ENCODE measurements at regions of chr1 and their contacts with region 1.

Region 1: DNA sequence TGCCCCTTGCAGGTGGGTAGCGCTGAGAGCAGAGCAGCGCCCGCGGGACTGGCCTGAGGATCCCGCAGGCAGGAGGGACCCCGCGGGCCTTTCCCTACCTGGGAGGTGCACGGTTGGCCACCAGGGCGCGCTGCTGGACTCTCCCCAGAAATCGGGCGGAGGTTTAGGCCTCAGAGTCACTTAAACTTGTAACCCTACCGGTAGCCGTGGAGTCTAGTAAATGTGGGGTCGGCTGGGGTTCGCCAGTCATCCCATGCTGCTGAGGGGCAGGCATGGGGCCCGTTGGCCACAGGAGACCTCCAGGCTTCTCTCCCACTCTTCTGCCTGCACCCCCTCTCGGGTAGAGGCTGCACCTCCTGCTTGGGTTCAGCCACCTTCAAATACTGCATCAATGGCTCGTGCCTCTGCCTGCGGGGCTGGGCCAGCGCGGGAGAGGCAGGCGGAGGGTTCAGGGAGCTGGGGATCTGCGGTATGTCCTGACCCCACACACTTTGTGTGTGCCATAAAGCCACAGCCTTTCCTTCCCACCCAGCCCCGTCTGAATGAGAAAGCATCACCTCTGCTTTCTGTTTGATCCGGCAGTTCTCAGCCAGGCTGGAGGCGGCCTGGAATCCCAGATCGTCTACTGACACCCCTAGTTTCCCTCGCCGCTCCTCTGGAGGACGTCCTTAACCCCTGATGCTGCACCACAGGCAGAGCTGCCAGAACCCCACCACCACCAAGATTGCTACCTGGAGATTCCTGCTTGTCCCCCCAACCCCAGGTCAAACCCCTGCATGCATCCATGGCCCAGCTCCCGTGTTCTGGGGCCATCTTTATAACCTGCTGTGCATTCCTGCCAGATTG is 12.3 kb upstream of the GSTM4 start:
- DNase-seq: peak; percentile 95
- ATAC-seq: peak; percentile 98
- H3K4me3 Mint-ChIP-seq: no peak overlapping the region
- H3K27ac Mint-ChIP-seq: no peak overlapping the region
- H3K4me1 Mint-ChIP-seq: peaks cover 10% of the 10 kb centered on the region
- H3K27me3 Mint-ChIP-seq: no peaks in the 10 kb centered on the region

Region 2: GRCh38 chr1:109598655-109599054 is 45.0 kb before region 1 on chr1:
- CTCF ChIA-PET with region 1: interaction called, 18 read pairs
- POLR2A ChIA-PET with region 1: no interaction called
- intact Hi-C with region 1: no loop called
- DNase-seq: no peak
- ATAC-seq: no peak
- H3K4me3 Mint-ChIP-seq: no peak overlapping the region
- H3K27ac Mint-ChIP-seq: no peak overlapping the region
- H3K4me1 Mint-ChIP-seq: peaks cover 21% of the 10 kb centered on the region
- H3K27me3 Mint-ChIP-seq: no peaks in the 10 kb centered on the region

Region 3: GRCh38 chr1:109655601-109656519 is 12.3 kb after region 1 on chr1 and contains the start of gene GSTM4:
- CTCF ChIA-PET with region 1: interaction called, 141 read pairs
- POLR2A ChIA-PET with region 1: no interaction called
- intact Hi-C with region 1: loop called (anchors 2 kb)
- DNase-seq: peak; percentile 85
- ATAC-seq: peak; percentile 96
- H3K4me3 Mint-ChIP-seq: peak within 1 kb of the TSS; percentile 93
- H3K27ac Mint-ChIP-seq: peak within 1 kb of the TSS; percentile 90
- H3K4me1 Mint-ChIP-seq: peaks cover 12% of the 10 kb centered on the region
- H3K27me3 Mint-ChIP-seq: peaks cover 3% of the 10 kb centered on the region
- total RNA-seq, gene GSTM4: 18.1 to 20.6 TPM

Region 4: DNA sequence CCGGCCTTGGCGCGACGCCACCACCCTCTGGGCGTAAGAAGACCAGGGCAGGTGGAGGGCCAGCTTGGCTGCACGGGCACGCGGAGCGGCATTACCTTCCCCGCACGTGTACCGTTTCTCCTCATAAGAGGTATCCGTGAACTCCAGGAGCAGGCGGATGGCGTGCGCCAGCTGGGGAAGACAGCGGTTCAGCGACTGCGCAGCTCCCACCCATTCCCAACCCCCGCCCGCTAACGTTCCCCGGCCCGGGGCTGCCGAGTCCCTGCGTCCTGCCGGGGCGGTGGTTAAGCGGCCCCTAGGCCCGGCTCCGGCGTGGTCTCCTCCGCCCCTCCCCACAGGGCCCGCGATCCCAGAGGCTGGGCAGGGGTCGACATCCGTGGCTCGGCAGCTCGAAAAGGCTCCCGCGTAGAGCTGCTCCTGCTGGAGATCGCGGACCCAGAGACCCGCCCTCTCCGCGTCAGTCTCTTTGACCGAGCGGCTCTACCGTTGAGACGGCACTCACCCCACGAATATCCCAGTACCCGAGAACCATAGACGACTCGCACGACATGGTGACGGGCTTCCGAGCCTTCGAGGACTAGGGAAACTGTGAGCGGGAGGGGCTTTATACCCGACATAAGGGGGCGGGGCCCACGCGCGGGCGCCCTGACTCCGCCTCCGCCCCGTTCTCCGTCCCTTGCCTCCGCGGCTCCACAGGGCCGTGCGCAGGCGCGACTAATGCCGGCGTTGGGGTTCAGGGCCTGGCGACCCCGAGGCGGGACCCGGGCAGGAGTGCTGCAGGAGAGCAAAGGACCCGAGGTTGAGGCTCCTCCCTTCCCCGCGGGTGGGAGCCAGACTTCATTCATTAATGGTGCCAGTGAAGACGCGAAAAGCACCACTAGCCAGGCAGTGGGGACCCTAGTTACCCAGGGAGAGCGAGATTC is 96.4 kb after region 1 on chr1:
- CTCF ChIA-PET with region 1: interaction called, 11 read pairs
- POLR2A ChIA-PET with region 1: no interaction called
- intact Hi-C with region 1: no loop called
- DNase-seq: peak; percentile 92
- ATAC-seq: peak; percentile 99
- H3K4me3 Mint-ChIP-seq: peak overlapping the region; percentile 82
- H3K27ac Mint-ChIP-seq: peak overlapping the region; percentile 79
- H3K4me1 Mint-ChIP-seq: peaks cover 16% of the 10 kb centered on the region
- H3K27me3 Mint-ChIP-seq: peaks cover 1% of the 10 kb centered on the region

Region 5: DNA sequence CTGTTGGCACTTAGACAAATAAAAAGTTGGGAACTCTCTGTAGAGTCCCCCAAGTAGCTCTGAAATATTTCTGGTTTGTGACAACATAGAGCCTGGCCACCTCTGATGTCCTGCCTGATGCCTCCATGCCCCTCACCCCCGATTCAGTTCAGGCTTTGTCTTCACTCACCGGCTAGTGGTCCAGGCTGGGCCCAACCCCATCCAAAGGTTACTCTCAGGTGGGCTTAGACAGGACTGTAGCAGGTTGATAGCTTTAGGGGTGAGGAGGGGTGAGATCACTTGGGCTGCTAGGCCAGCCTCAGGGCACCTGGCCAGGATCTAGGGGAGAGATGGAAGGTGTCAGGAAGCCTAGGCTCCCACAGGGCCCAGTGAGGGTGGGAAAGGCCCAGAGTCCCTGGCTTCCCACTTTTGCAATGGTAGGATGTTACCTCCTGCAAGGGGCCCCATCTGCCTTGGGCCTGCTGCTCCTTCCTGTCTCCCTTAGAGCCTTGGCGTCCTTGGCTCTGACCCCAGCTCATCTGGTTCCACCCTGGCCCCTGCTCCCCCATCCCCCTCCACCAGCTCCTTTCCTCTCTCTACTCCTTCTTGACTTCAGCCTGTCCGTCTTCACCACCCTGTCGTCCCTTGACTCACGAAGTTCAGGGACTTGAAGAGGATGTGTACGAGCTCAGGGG is 113.4 kb after region 1 on chr1:
- CTCF ChIA-PET with region 1: interaction called, 11 read pairs
- POLR2A ChIA-PET with region 1: no interaction called
- intact Hi-C with region 1: no loop called
- DNase-seq: no peak
- ATAC-seq: no peak
- H3K4me3 Mint-ChIP-seq: no peak overlapping the region
- H3K27ac Mint-ChIP-seq: no peak overlapping the region
- H3K4me1 Mint-ChIP-seq: no peaks in the 10 kb centered on the region
- H3K27me3 Mint-ChIP-seq: peaks cover 4% of the 10 kb centered on the region

Region 6: GRCh38 chr1:109897259-109897955 is 253.8 kb after region 1 on chr1:
- CTCF ChIA-PET with region 1: no interaction called
- POLR2A ChIA-PET with region 1: no interaction called
- intact Hi-C with region 1: no loop called
- DNase-seq: no peak
- ATAC-seq: no peak
- H3K4me3 Mint-ChIP-seq: no peak overlapping the region
- H3K27ac Mint-ChIP-seq: no peak overlapping the region
- H3K4me1 Mint-ChIP-seq: peaks cover under 1% of the 10 kb centered on the region
- H3K27me3 Mint-ChIP-seq: no peaks in the 10 kb centered on the region

Measured in activated CD4-positive, alpha-beta T cell treated with anti-CD3 and anti-CD28 coated beads for 36 hours (primary cell).